HepG2 (cell line): ENCODE measurements at regions of chr6 and their contacts with region 1.

Region 1: DNA sequence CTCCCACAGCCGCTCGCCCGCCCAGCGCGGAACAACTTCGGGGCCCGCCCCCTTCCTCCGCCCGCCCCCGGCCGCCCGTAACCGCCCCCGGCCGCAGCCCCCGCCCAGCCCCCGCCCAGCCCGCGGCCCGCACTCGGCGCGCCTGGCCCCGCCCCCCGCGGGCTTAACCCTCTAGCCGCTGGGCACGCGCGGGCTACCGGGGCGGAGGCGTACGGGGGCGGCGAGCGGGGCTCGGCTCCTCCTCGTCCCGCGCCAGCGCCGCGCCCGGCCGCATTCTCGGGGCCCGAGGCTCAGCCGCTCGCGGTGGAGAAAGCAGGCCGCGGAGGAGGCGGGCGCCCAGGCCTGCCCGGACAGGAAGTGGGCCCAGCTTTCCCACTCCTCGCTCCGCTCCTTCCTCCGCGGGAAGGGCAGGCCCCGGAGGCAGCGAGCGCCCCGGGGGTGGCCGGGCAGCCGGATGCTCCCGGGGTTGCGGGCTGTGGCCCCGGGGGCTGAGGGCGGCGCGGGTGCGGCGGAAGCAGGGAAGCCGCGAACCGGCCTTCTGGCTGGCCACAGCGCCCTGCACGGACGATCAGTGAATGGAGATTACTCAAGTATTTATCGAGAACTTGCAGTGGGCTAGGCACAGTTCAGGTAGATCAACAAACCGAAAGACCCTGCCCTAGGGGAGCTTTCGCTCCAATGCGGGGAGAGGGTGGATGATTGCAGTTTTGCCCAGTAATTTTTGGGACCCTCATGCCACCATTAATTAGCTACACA is at the start of gene TRAM2:
- DNase-seq: peak; percentile 76
- ATAC-seq: peak; percentile 82
- H3K4me3 ChIP-seq: peak within 1 kb of the TSS; percentile 85 to 97 (median 89)
- H3K27ac ChIP-seq: peak within 1 kb of the TSS; percentile 95
- H3K4me1 ChIP-seq: peaks cover 54% of the 10 kb centered on the region
- H3K27me3 ChIP-seq: no peaks in the 10 kb centered on the region; a peak in 1 of 5 replicates
- CTCF ChIP-seq: peak; percentile 43
- EP300 ChIP-seq: peak; percentile 21 to 55; a peak in 1 of 4 replicates
- POLR2A ChIP-seq: peak; percentile 57 to 87
- RAD21 ChIP-seq: peak; percentile 82
- total RNA-seq, gene TRAM2: 40.5 and 49.1 TPM in 2 replicates

Region 2: GRCh38 chr6:52419809-52420670 is 157.2 kb before region 1 on chr6 and contains the start of gene EFHC1:
- CTCF ChIA-PET with region 1: no interaction called
- POLR2A ChIA-PET with region 1: interaction called, 11 read pairs
- in situ Hi-C with region 1: no loop called
- intact Hi-C with region 1: loop called (anchors 1 kb)
- DNase-seq: peak; percentile 98
- ATAC-seq: peak; percentile 96
- H3K4me3 ChIP-seq: peak within 1 kb of the TSS; percentile 78 to 99 (median 90)
- H3K27ac ChIP-seq: peak within 1 kb of the TSS; percentile 91
- H3K4me1 ChIP-seq: peaks cover 62% of the 10 kb centered on the region
- H3K27me3 ChIP-seq: peaks cover 0 to 4% of the 10 kb centered on the region in 2 experiments; a peak in 1 of 5 replicates
- CTCF ChIP-seq: peak; percentile 33
- EP300 ChIP-seq: no peak; a peak in 1 of 4 replicates
- POLR2A ChIP-seq: peak; percentile 97 to 98
- RAD21 ChIP-seq: peak; percentile 72
- total RNA-seq, gene EFHC1: 18.6 and 23.4 TPM in 2 replicates

Region 3: DNA sequence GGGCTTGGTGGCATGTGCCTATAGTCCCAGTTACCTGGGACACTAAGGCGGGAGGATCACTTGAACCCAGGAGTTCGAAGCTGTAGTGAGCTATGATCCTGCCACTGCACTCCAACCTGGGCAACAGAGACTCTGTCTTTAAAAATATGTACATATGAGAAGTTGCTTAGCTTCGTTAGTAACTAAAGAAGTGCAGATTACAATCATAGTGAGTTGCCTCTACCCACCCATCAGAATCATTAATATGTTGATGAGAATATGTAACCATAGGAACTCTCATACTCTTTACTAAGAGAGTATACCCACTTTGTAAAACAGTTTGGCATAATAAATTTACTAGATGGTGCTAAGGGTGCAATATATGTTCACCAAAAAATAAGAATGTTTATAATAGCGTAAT is 103.0 kb before region 1 on chr6:
- CTCF ChIA-PET with region 1: no interaction called
- POLR2A ChIA-PET with region 1: no interaction called
- in situ Hi-C with region 1: no loop called
- intact Hi-C with region 1: no loop called
- DNase-seq: no peak
- ATAC-seq: no peak
- H3K4me3 ChIP-seq: no peak overlapping the region
- H3K27ac ChIP-seq: no peak overlapping the region
- H3K4me1 ChIP-seq: no peaks in the 10 kb centered on the region
- H3K27me3 ChIP-seq: no peaks in the 10 kb centered on the region
- CTCF ChIP-seq: no peak
- EP300 ChIP-seq: no peak
- POLR2A ChIP-seq: no peak
- RAD21 ChIP-seq: no peak

Region 4: DNA sequence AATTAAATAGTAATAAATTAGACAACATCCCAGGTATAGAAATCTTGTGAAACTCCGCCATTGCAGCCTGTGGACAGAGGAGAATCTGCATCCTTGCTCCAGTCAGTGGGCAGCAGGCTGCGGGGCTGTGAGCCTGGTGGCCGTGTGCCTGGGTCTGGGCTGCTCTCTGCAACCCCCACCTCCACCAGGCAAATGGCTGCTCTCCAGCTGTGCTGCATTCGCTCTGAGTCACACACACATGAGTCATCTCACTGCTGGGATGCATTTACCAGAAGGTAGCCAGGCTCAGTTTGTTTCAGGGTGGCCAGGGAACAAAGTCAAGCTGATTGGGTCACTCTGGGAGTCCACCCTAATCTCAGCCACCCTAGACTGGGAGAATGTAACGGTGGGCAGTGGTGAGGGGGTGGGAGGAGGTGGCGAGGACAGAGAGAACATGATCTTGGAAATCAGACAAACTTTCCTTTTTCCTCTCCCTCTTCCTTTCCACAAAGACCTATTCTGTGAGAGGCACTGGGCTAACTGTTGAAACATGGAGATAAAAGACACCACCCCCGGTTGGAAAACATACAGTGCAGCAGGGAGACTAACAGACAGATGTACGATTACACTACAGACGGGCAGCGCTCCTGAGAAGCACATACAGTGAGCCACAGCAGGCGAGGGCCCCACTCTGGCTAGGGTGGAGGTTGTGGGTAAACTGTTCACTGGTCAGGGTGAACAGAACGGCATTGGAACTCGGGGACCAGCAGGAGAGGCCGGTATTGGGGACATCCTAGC is 59.5 kb before region 1 on chr6:
- CTCF ChIA-PET with region 1: no interaction called
- POLR2A ChIA-PET with region 1: interaction called, 7 read pairs
- in situ Hi-C with region 1: loop called (anchors 5 kb)
- intact Hi-C with region 1: loop called (anchors 2 kb)
- DNase-seq: peak; percentile 92
- ATAC-seq: peak; percentile 92
- H3K4me3 ChIP-seq: peak overlapping the region; percentile 10 to 52 (median 26); a peak in 5 of 6 replicates
- H3K27ac ChIP-seq: peak overlapping the region; percentile 73
- H3K4me1 ChIP-seq: peaks cover 74% of the 10 kb centered on the region
- H3K27me3 ChIP-seq: no peaks in the 10 kb centered on the region
- CTCF ChIP-seq: peak; percentile 26; the same call in 1 of the 2 replicates
- EP300 ChIP-seq: peak in 1 of 2 experiments; percentile 64; a peak in 2 of 4 replicates
- POLR2A ChIP-seq: peak; percentile 40 to 44; a peak in 1 of 4 replicates
- RAD21 ChIP-seq: no peak

Region 5: DNA sequence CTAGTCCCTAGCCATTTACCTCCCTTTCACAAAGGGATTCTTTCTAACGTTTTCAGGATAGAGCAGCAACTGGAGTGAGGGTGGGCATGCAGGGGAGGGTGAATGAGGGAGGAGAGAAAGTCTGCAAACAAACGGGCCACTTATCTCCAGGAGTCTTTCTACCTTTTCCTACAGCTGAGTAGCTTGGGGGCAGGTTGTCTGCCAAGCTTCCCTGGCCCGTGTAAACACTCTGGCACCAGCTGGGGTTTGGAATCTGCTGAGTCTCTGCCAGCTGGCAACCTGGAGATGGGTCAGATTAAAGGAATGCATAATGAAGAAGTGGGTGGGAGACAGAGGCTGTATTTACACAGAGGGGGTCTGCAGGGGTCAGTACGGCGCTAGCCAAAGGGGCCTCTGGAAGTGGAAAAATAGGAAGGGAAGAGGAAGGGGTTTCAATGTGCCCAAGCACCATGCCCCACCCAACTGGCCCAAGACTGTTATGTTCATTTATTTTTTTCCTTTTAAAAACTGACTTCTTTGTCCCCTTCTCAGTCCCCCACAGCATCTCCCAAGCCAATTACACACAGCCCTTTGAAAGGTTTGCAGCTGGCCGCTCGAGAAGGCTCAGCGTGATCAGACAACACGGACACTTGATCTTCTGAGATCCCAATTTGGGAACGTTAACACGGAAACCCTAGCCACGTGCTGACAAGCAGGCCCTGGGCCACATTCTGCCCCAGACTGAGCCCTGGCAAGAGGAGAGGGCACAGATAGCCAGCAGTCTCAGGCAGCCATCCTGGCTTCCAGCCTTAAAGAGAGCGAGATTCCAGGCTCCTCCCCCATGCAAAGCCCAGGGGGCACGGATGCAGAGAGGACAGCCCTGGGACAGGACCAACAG is 25.6 kb before region 1 on chr6:
- CTCF ChIA-PET with region 1: no interaction called
- POLR2A ChIA-PET with region 1: interaction called, 24 read pairs
- in situ Hi-C with region 1: no loop called
- intact Hi-C with region 1: no loop called
- DNase-seq: peak; percentile 77
- ATAC-seq: peak; percentile 16
- H3K4me3 ChIP-seq: no peak overlapping the region
- H3K27ac ChIP-seq: peak overlapping the region; percentile 3
- H3K4me1 ChIP-seq: peaks cover 81% of the 10 kb centered on the region
- H3K27me3 ChIP-seq: no peaks in the 10 kb centered on the region
- CTCF ChIP-seq: no peak
- EP300 ChIP-seq: peak in 1 of 2 experiments; percentile 17; a peak in 1 of 4 replicates
- POLR2A ChIP-seq: no peak
- RAD21 ChIP-seq: no peak

Region 6: GRCh38 chr6:52590152-52590931 is 13.1 kb after region 1 on chr6:
- CTCF ChIA-PET with region 1: interaction called, 8 read pairs
- POLR2A ChIA-PET with region 1: interaction called, 133 read pairs
- in situ Hi-C with region 1: no loop called
- intact Hi-C with region 1: loop called (anchors 1 kb)
- DNase-seq: peak; percentile 77
- ATAC-seq: peak; percentile 62
- H3K4me3 ChIP-seq: peak overlapping the region in 1 of 3 experiments; percentile 33; a peak in 2 of 6 replicates
- H3K27ac ChIP-seq: peak overlapping the region; percentile 93
- H3K4me1 ChIP-seq: peaks cover 71% of the 10 kb centered on the region
- H3K27me3 ChIP-seq: no peaks in the 10 kb centered on the region
- CTCF ChIP-seq: peak; percentile 86
- EP300 ChIP-seq: peak in 1 of 2 experiments; percentile 29; a peak in 2 of 4 replicates
- POLR2A ChIP-seq: no peak
- RAD21 ChIP-seq: peak; percentile 78

Region 7: GRCh38 chr6:52635049-52635577 is 57.9 kb after region 1 on chr6:
- CTCF ChIA-PET with region 1: no interaction called
- POLR2A ChIA-PET with region 1: no interaction called
- in situ Hi-C with region 1: no loop called
- intact Hi-C with region 1: no loop called
- DNase-seq: no peak
- ATAC-seq: no peak
- H3K4me3 ChIP-seq: no peak overlapping the region
- H3K27ac ChIP-seq: no peak overlapping the region
- H3K4me1 ChIP-seq: peaks cover 41% of the 10 kb centered on the region
- H3K27me3 ChIP-seq: no peaks in the 10 kb centered on the region; a peak in 1 of 5 replicates
- CTCF ChIP-seq: no peak
- EP300 ChIP-seq: no peak
- POLR2A ChIP-seq: no peak
- RAD21 ChIP-seq: no peak

Region 8: GRCh38 chr6:52664186-52664990 is 87.2 kb after region 1 on chr6:
- CTCF ChIA-PET with region 1: interaction called, 22 read pairs
- POLR2A ChIA-PET with region 1: interaction called, 4 read pairs
- in situ Hi-C with region 1: no loop called
- intact Hi-C with region 1: loop called (anchors 1 kb)
- DNase-seq: peak; percentile 97
- ATAC-seq: peak; percentile 96
- H3K4me3 ChIP-seq: peak overlapping the region; percentile 72 to 89 (median 89)
- H3K27ac ChIP-seq: peak overlapping the region; percentile 64
- H3K4me1 ChIP-seq: peaks cover 50% of the 10 kb centered on the region
- H3K27me3 ChIP-seq: no peaks in the 10 kb centered on the region; a peak in 1 of 5 replicates
- CTCF ChIP-seq: no peak
- EP300 ChIP-seq: no peak; a peak in 1 of 4 replicates
- POLR2A ChIP-seq: peak; percentile 96 to 98
- RAD21 ChIP-seq: peak; percentile 40

Region 9: DNA sequence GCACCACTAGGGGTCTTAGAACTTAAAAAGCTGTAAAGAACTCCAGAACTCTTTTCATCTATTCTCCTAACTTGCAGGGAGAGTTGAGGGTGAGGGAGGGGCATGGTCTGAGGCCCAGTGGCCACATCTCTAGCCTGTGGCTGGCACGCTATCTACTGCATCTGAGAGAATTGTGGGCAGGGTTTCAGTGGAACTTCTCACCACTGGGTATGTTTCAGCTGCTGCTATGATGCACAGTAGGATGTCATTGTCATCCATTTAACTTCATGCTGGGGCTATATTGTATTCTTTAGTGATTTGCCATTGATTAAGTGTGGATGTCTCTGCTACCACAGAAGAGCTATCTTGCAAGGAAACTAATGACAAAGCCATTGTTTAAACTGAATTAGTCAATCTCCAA is 98.2 kb after region 1 on chr6:
- CTCF ChIA-PET with region 1: no interaction called
- POLR2A ChIA-PET with region 1: no interaction called
- in situ Hi-C with region 1: no loop called
- intact Hi-C with region 1: no loop called
- DNase-seq: no peak
- ATAC-seq: no peak
- H3K4me3 ChIP-seq: no peak overlapping the region
- H3K27ac ChIP-seq: no peak overlapping the region
- H3K4me1 ChIP-seq: peaks cover 22% of the 10 kb centered on the region
- H3K27me3 ChIP-seq: no peaks in the 10 kb centered on the region; a peak in 1 of 5 replicates
- CTCF ChIP-seq: no peak
- EP300 ChIP-seq: no peak
- POLR2A ChIP-seq: no peak
- RAD21 ChIP-seq: no peak